PC-3 (cell line): ENCODE measurements at regions of chr9 and their contacts with region 1.

Region 1: GRCh38 chr9:88593537-88594185 is 58.7 kb downstream of the NXNL2 start:
- DNase-seq: peak; percentile 63
- ATAC-seq: peak; percentile 75
- H3K4me3 ChIP-seq: no peak overlapping the region
- H3K27ac ChIP-seq: no peak overlapping the region
- H3K4me1 ChIP-seq: no peaks in the 10 kb centered on the region
- H3K27me3 ChIP-seq: no peaks in the 10 kb centered on the region
- CTCF ChIP-seq: peak; percentile 70

Region 2: DNA sequence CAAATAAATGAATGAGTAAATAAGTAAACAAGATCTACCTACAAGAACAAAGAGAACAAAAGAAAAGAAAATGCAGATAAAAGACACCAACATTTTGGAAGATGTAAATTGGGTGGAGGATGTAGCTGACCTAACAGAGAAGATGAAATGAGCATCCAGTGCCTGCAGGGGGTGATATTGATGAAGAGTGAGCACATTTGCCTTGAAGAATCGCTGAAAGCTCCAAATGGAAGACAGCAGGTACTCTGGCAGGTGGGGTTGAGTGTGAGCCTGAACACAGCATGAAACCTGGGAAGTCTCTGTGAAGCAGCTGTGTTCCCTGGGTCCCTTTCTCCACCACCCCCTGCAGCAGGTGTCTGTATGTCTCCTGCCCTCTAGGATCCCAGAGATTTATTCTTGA is 67.0 kb after region 1 on chr9:
- CTCF ChIA-PET with region 1: interaction called, 3 read pairs
- POLR2A ChIA-PET with region 1: no interaction called
- intact Hi-C with region 1: loop called (anchors 10 kb)
- DNase-seq: peak; percentile 69
- ATAC-seq: peak; percentile 45; the same call in 1 of the 2 replicates
- H3K4me3 ChIP-seq: no peak overlapping the region
- H3K27ac ChIP-seq: no peak overlapping the region
- H3K4me1 ChIP-seq: no peaks in the 10 kb centered on the region
- H3K27me3 ChIP-seq: no peaks in the 10 kb centered on the region
- CTCF ChIP-seq: peak; percentile 68

Region 3: GRCh38 chr9:88722753-88723152 is 129.1 kb after region 1 on chr9:
- CTCF ChIA-PET with region 1: no interaction called
- POLR2A ChIA-PET with region 1: no interaction called
- intact Hi-C with region 1: loop called (anchors 10 kb)
- DNase-seq: peak; percentile 47
- ATAC-seq: peak; percentile 50; the same call in 1 of the 2 replicates
- H3K4me3 ChIP-seq: no peak overlapping the region
- H3K27ac ChIP-seq: no peak overlapping the region
- H3K4me1 ChIP-seq: peaks cover 16% of the 10 kb centered on the region
- H3K27me3 ChIP-seq: no peaks in the 10 kb centered on the region
- CTCF ChIP-seq: peak; percentile 61

Region 4: DNA sequence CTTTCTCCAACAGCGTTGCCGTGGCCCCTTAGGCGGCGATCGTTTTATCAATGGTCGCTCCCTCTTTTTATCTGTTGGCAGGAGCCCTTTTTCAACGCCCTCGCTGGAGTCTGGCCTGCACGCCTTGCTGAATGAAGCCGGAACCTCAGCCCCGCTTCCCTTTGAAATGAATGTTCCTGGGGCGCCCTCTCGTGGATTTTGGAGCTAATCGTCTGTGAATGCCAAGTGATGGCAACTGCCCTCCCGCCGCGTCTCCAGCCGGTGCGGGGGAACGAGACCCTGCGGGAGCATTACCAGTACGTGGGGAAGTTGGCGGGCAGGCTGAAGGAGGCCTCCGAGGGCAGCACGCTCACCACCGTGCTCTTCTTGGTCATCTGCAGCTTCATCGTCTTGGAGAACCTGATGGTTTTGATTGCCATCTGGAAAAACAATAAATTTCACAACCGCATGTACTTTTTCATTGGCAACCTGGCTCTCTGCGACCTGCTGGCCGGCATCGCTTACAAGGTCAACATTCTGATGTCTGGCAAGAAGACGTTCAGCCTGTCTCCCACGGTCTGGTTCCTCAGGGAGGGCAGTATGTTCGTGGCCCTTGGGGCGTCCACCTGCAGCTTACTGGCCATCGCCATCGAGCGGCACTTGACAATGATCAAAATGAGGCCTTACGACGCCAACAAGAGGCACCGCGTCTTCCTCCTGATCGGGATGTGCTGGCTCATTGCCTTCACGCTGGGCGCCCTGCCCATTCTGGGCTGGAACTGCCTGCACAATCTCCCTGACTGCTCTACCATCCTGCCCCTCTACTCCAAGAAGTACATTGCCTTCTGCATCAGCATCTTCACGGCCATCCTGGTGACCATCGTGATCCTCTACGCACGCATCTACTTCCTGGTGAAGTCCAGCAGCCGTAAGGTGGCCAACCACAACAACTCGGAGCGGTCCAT is 407.6 kb after region 1 on chr9:
- CTCF ChIA-PET with region 1: interaction called, 3 read pairs
- POLR2A ChIA-PET with region 1: no interaction called
- intact Hi-C with region 1: loop called (anchors 1 kb)
- DNase-seq: peak; percentile 79
- ATAC-seq: peak; percentile 76
- H3K4me3 ChIP-seq: peak overlapping the region; percentile 49; the same call in 1 of the 2 replicates
- H3K27ac ChIP-seq: no peak overlapping the region
- H3K4me1 ChIP-seq: no peaks in the 10 kb centered on the region
- H3K27me3 ChIP-seq: no peaks in the 10 kb centered on the region
- CTCF ChIP-seq: peak; percentile 75

Region 5: GRCh38 chr9:89278997-89279739 is 685.5 kb after region 1 on chr9:
- CTCF ChIA-PET with region 1: no interaction called
- POLR2A ChIA-PET with region 1: no interaction called
- intact Hi-C with region 1: loop called (anchors 5 kb)
- DNase-seq: peak; percentile 78
- ATAC-seq: peak; percentile 51; the same call in 1 of the 2 replicates
- H3K4me3 ChIP-seq: no peak overlapping the region
- H3K27ac ChIP-seq: no peak overlapping the region
- H3K4me1 ChIP-seq: no peaks in the 10 kb centered on the region
- H3K27me3 ChIP-seq: no peaks in the 10 kb centered on the region
- CTCF ChIP-seq: peak; percentile 70